Mammary epithelial cell (primary cell): ENCODE measurements at regions of chr11 and their contacts with region 1.

Region 1: GRCh38 chr11:57230791-57231538 is 6.1 kb downstream of the APLNR start:
- DNase-seq: no peak
- H3K4me3 ChIP-seq: no peak overlapping the region
- H3K27ac ChIP-seq: no peak overlapping the region
- H3K4me1 ChIP-seq: no peaks in the 10 kb centered on the region
- H3K27me3 ChIP-seq: peaks cover 1% of the 10 kb centered on the region
- CTCF ChIP-seq: no peak

Region 2: DNA sequence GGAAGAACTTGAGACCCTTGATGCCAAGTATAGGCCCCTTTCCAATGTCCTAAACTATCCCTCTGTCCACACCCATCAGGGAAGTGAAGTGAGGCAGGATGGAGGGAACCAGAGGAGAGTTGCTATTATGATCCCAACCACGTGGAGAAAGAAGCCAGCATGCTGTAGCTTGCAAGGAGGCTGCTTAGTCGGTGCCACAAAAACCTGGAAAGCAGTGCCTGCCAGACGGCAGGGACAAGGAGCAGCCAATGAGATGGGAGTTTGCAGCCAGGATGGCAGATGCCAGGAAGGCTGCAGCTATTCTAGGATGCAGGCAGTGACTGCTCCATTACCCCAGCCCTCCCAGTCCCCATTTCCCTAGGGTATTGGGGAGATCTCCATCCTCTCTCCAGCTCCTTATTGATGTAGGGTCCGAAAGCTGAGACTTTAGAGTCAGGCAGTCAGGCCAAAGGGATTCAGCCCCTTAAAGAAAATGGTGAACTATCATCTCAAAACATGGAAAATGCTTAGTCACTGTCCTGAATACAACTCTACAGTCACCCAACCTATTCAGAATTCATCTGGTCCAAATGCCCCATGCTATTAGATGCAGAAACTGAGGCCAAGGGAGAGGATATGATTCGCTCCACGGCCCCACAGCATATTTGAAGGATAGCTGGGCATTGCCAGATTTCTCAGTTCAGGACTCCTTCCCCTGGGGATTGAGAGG is 67.7 kb before region 1 on chr11:
- CTCF ChIA-PET with region 1: no interaction called
- dilution Hi-C with region 1: no loop called
- in situ Hi-C with region 1: no loop called
- intact Hi-C with region 1: loop called (anchors 5 kb)
- DNase-seq: no peak
- H3K4me3 ChIP-seq: no peak overlapping the region
- H3K27ac ChIP-seq: no peak overlapping the region
- H3K4me1 ChIP-seq: no peaks in the 10 kb centered on the region
- H3K27me3 ChIP-seq: no peaks in the 10 kb centered on the region
- CTCF ChIP-seq: no peak

Region 3: GRCh38 chr11:57512646-57513451 is 281.9 kb after region 1 on chr11:
- CTCF ChIA-PET with region 1: no interaction called
- dilution Hi-C with region 1: no loop called
- in situ Hi-C with region 1: no loop called
- intact Hi-C with region 1: no loop called
- DNase-seq: no peak
- H3K4me3 ChIP-seq: no peak overlapping the region
- H3K27ac ChIP-seq: no peak overlapping the region
- H3K4me1 ChIP-seq: peaks cover 13% of the 10 kb centered on the region
- H3K27me3 ChIP-seq: peaks cover 16% of the 10 kb centered on the region
- CTCF ChIP-seq: no peak